ENCODE measurements at regions of chr4 and their contacts with region 1.

Region 1: GRCh38 chr4:46329118-46329976 is 60.6 kb downstream of the GABRA2 start:
- DNase-seq: no peak

Region 2: DNA sequence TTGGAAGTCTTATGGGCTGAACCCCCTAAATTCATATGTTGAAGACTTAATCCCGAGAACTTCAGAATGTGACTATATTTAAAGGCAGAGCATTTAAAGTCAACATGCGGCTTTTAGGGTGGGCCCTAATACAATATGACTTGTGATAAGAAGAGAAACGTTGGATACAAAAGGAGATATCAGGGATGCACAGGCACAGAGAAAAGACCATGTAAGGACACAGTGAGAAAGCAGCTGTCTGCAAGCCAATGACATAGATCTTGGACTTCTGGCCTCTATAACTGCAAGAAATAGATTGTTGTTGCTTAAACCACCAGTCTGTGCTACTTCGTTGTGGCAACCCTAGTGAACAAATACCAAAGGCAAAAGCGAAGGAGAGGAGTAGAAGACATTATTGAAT is 247.7 kb before region 1 on chr4:
- intact Hi-C with region 1: no loop called
- DNase-seq: no peak

Region 3: GRCh38 chr4:47145630-47146029 is 816.3 kb after region 1 on chr4:
- intact Hi-C with region 1: loop called in 1 of 2 experiments (anchors 5 kb)
- DNase-seq: no peak

Measured in posterior vena cava (tissue), 2 donors.